ENCODE measurements at regions of chr15 and their contacts with region 1.

Region 1: GRCh38 chr15:90184786-90185569 is 16.2 kb upstream of the SEMA4B start:
- DNase-seq: peak; percentile 76
- H3K4me3 Mint-ChIP-seq: peak overlapping the region; percentile 75
- H3K27ac Mint-ChIP-seq: peak overlapping the region; percentile 88
- H3K4me1 Mint-ChIP-seq: peaks cover 26% of the 10 kb centered on the region
- H3K27me3 Mint-ChIP-seq: no peaks in the 10 kb centered on the region
- CTCF ChIP-seq: no peak

Region 2: GRCh38 chr15:90161950-90162361 is 23.0 kb before region 1 on chr15:
- CTCF ChIA-PET with region 1: interaction called, 4 read pairs
- intact Hi-C with region 1: loop called (anchors 2 kb)
- DNase-seq: no peak
- H3K4me3 Mint-ChIP-seq: no peak overlapping the region
- H3K27ac Mint-ChIP-seq: peak overlapping the region; percentile 22
- H3K4me1 Mint-ChIP-seq: peaks cover 82% of the 10 kb centered on the region
- H3K27me3 Mint-ChIP-seq: no peaks in the 10 kb centered on the region
- CTCF ChIP-seq: no peak

Region 3: DNA sequence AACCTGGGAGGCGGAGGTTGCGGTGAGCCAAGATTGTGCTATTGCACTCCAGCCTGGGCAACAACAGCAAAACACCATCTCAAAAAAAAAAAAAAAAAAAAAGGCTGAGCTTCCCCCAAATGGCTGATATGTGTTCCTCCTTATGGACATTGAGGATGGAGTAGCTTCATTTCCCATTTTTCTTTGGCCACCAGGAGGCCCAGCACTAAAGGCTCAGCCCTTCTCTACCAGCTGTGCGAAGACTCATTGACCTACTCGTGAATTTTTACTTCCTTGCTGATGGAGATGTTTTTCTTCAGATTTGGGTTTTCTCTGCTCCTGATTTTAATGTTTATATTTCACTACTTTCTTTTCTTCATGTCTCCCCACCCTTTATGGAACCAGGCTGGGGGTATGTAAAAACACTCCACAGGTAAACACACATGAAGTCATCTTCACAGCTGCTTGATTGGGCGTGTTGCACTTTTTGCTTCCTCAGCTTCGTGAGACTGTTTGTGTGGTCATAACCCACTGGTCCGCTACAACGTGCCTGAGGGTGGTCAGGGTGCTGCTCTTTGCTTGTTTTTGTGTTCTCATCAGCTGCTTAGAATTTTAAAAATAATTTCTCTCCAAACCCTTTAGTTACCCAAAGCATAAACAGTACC is 29.7 kb after region 1 on chr15:
- CTCF ChIA-PET with region 1: no interaction called
- intact Hi-C with region 1: loop called (anchors 2 kb)
- DNase-seq: no peak
- H3K4me3 Mint-ChIP-seq: no peak overlapping the region
- H3K27ac Mint-ChIP-seq: no peak overlapping the region
- H3K4me1 Mint-ChIP-seq: peaks cover 53% of the 10 kb centered on the region
- H3K27me3 Mint-ChIP-seq: no peaks in the 10 kb centered on the region
- CTCF ChIP-seq: peak; percentile 38